K562 (cell line): ENCODE measurements at regions of chr11 and their contacts with region 1.

Region 1: GRCh38 chr11:66530927-66531709 is 14.7 kb downstream of the ZDHHC24 start:
- DNase-seq: no peak
- ATAC-seq: peak; percentile 25; the same call in 1 of the 3 replicates
- H3K4me3 ChIP-seq: no peak overlapping the region
- H3K27ac ChIP-seq: no peak overlapping the region
- H3K4me1 ChIP-seq: peaks cover 0 to 9% of the 10 kb centered on the region in 2 experiments; a peak in 1 of 5 replicates
- H3K27me3 ChIP-seq: no peaks in the 10 kb centered on the region
- CTCF ChIP-seq: no peak
- EP300 ChIP-seq: no peak
- POLR2A ChIP-seq: no peak
- RAD21 ChIP-seq: no peak

Region 2: DNA sequence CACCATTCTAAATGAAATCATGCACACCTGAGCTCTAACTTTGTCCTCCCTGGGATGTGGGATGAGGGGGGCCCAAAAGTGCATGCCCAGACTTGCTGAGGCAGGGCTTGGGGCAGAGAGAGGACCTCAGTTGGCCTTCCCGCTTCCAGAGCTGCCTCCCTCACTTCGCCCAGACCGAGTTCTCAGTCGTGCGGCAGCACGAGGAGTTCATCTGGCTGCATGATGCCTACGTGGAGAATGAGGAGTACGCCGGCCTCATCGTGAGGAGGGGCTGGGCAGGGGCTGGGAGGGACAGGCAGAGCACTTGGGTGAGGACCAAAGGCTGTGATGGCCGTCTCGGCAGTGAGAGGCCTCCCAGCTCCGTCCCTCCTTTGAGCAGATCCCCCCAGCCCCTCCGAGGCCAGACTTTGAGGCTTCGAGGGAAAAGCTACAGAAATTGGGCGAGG is 681.3 kb before region 1 on chr11:
- CTCF ChIA-PET with region 1: no interaction called
- POLR2A ChIA-PET with region 1: no interaction called
- in situ Hi-C with region 1: no loop called
- intact Hi-C with region 1: no loop called
- DNase-seq: peak in 2 of 4 experiments; percentile 3 to 6
- ATAC-seq: no peak
- H3K4me3 ChIP-seq: no peak overlapping the region
- H3K27ac ChIP-seq: no peak overlapping the region
- H3K4me1 ChIP-seq: peaks cover 0 to 21% of the 10 kb centered on the region in 2 experiments; a peak in 3 of 5 replicates
- H3K27me3 ChIP-seq: no peaks in the 10 kb centered on the region
- CTCF ChIP-seq: no peak
- EP300 ChIP-seq: no peak
- POLR2A ChIP-seq: no peak
- RAD21 ChIP-seq: no peak

Region 3: DNA sequence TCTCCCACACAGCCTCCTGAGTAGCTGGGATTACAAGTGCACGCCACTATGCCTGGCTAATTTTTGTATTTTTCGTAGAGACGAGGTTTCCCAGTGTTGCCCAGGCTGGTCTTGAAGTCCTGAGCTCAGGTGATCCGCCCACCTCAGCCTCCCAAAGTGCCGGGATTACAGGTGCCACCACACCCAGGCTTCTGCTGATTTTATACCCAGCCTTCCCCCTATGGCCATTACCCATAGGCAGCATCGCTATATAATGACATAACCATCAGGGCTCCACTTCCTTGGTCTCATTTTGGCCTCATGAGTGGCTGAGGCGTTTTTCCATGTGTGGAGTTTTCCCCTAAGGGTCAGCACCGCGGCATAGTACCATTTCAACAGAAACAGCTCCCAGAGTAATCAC is 323.2 kb before region 1 on chr11:
- CTCF ChIA-PET with region 1: no interaction called
- POLR2A ChIA-PET with region 1: no interaction called
- in situ Hi-C with region 1: no loop called
- intact Hi-C with region 1: no loop called
- DNase-seq: no peak
- ATAC-seq: no peak
- H3K4me3 ChIP-seq: no peak overlapping the region
- H3K27ac ChIP-seq: no peak overlapping the region
- H3K4me1 ChIP-seq: peaks cover 3 to 4% of the 10 kb centered on the region in 2 experiments; a peak in 2 of 5 replicates
- H3K27me3 ChIP-seq: no peaks in the 10 kb centered on the region
- CTCF ChIP-seq: no peak
- EP300 ChIP-seq: no peak
- POLR2A ChIP-seq: no peak
- RAD21 ChIP-seq: no peak

Region 4: GRCh38 chr11:66545701-66546367 is 14.7 kb after region 1 on chr11 and contains the start of gene ZDHHC24:
- CTCF ChIA-PET with region 1: no interaction called
- POLR2A ChIA-PET with region 1: interaction called, 12 read pairs
- in situ Hi-C with region 1: no loop called
- intact Hi-C with region 1: no loop called
- DNase-seq: peak; percentile 97 to 99 (median 98)
- ATAC-seq: peak; percentile 99
- H3K4me3 ChIP-seq: peak within 1 kb of the TSS; percentile 94
- H3K27ac ChIP-seq: peak within 1 kb of the TSS; percentile 73
- H3K4me1 ChIP-seq: peaks cover 0 to 38% of the 10 kb centered on the region in 2 experiments; a peak in 4 of 5 replicates
- H3K27me3 ChIP-seq: peaks cover 0 to 4% of the 10 kb centered on the region in 2 experiments; a peak in 1 of 5 replicates
- CTCF ChIP-seq: no peak
- EP300 ChIP-seq: no peak
- POLR2A ChIP-seq: peak; percentile 83
- RAD21 ChIP-seq: no peak
- polyA plus RNA-seq, gene ZDHHC24: 0.45 to 0.65 TPM

Region 5: GRCh38 chr11:66625041-66625751 is 94.1 kb after region 1 on chr11:
- CTCF ChIA-PET with region 1: no interaction called
- POLR2A ChIA-PET with region 1: no interaction called
- in situ Hi-C with region 1: no loop called
- intact Hi-C with region 1: no loop called
- DNase-seq: no peak
- ATAC-seq: no peak
- H3K4me3 ChIP-seq: no peak overlapping the region
- H3K27ac ChIP-seq: no peak overlapping the region
- H3K4me1 ChIP-seq: peaks cover 5 to 16% of the 10 kb centered on the region in 2 experiments; a peak in 4 of 5 replicates
- H3K27me3 ChIP-seq: no peaks in the 10 kb centered on the region
- CTCF ChIP-seq: no peak
- EP300 ChIP-seq: no peak
- POLR2A ChIP-seq: no peak
- RAD21 ChIP-seq: no peak